Activated naive CD4-positive, alpha-beta T cell treated with anti-CD3 and anti-CD28 coated beads for 36 hours (primary cell): ENCODE measurements at regions of chr1 and their contacts with region 1.

Region 1: DNA sequence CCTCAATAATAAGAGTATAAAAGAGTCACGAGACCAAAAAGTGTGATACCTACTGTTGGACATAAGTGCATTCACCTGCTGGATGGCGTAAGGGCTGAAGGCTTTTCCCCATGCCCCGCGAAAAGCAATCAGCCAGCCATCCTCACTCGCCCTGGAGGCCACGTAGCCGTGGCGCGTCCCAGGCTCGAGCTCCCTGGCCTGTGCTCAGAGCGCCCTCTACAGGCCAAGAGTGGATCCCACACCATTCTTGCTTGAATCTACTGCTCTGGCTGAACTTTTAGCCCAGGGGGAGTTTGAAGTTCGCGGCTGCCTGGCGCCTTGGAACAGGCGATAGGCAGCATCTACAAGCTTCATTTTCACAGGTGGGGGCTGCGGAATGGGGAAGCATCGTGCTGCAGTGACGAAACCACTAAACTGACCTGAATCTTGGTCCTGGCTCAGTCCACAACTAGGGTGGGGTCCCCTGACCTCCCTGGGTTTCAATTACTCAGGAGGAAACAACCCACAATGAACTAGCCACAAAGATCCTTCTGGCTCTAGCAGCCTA is 70.3 kb upstream of the SERBP1 start:
- DNase-seq: peak; percentile 95
- H3K4me3 Mint-ChIP-seq: peak overlapping the region; percentile 16
- H3K27ac Mint-ChIP-seq: no peak overlapping the region
- H3K4me1 Mint-ChIP-seq: peaks cover 10% of the 10 kb centered on the region
- H3K27me3 Mint-ChIP-seq: no peaks in the 10 kb centered on the region

Region 2: GRCh38 chr1:66996018-66996682 is 504.3 kb before region 1 on chr1:
- CTCF ChIA-PET with region 1: interaction called, 5 read pairs
- intact Hi-C with region 1: loop called (anchors 1 kb)
- DNase-seq: peak; percentile 89
- H3K4me3 Mint-ChIP-seq: no peak overlapping the region
- H3K27ac Mint-ChIP-seq: no peak overlapping the region
- H3K4me1 Mint-ChIP-seq: peaks cover 26% of the 10 kb centered on the region
- H3K27me3 Mint-ChIP-seq: no peaks in the 10 kb centered on the region

Region 3: DNA sequence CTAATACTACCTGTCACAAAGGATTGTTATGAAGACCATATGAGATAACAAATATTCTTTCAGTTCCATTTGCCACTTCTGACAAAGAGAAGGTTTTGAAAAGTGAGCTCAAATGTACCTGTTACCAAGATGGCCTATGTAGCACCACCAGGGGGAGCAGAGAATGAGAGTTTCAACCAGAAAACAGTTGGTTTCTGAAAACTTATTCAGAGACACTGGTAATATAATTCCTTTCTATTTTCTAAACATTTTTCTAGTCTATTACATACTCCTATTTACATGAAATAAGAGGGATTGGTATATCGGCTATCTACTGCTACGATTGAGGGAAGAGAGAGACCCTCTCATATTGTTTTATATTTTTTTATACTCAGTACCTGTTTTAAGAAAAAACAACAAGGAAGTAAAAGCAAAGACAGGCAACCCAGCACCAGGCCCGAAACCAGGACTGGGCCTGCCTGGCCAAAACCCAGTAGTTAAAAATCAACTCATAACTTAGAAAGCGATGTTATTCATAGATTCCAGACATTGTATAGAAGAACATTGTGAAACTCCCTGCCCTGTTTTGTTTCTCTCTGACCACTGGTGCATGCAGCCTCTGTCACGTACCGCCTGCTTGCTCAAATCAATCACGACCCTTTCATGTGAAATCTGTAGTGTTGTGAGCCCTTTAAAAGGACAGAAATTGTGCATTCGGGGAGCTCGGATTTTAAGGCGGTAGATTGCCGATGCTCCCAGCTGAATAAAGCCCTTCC is 285.9 kb before region 1 on chr1:
- CTCF ChIA-PET with region 1: interaction called, 93 read pairs
- intact Hi-C with region 1: loop called (anchors 1 kb)
- DNase-seq: peak; percentile 82
- H3K4me3 Mint-ChIP-seq: no peak overlapping the region
- H3K27ac Mint-ChIP-seq: peak overlapping the region; percentile 74
- H3K4me1 Mint-ChIP-seq: peaks cover 64% of the 10 kb centered on the region
- H3K27me3 Mint-ChIP-seq: no peaks in the 10 kb centered on the region

Region 4: GRCh38 chr1:67285780-67286488 is 214.6 kb before region 1 on chr1:
- CTCF ChIA-PET with region 1: interaction called, 5 read pairs
- intact Hi-C with region 1: loop called (anchors 1 kb)
- DNase-seq: peak; percentile 55
- H3K4me3 Mint-ChIP-seq: no peak overlapping the region
- H3K27ac Mint-ChIP-seq: peak overlapping the region; percentile 65
- H3K4me1 Mint-ChIP-seq: peaks cover 52% of the 10 kb centered on the region
- H3K27me3 Mint-ChIP-seq: no peaks in the 10 kb centered on the region

Region 5: GRCh38 chr1:67489643-67490042 is 10.8 kb before region 1 on chr1:
- CTCF ChIA-PET with region 1: interaction called, 18 read pairs
- intact Hi-C with region 1: no loop called
- DNase-seq: peak; percentile 40
- H3K4me3 Mint-ChIP-seq: no peak overlapping the region
- H3K27ac Mint-ChIP-seq: no peak overlapping the region
- H3K4me1 Mint-ChIP-seq: peaks cover under 1% of the 10 kb centered on the region
- H3K27me3 Mint-ChIP-seq: no peaks in the 10 kb centered on the region